Dorsolateral prefrontal cortex (tissue), 120 donors: ENCODE measurements at regions of chr15 and their contacts with region 1.

Region 1: DNA sequence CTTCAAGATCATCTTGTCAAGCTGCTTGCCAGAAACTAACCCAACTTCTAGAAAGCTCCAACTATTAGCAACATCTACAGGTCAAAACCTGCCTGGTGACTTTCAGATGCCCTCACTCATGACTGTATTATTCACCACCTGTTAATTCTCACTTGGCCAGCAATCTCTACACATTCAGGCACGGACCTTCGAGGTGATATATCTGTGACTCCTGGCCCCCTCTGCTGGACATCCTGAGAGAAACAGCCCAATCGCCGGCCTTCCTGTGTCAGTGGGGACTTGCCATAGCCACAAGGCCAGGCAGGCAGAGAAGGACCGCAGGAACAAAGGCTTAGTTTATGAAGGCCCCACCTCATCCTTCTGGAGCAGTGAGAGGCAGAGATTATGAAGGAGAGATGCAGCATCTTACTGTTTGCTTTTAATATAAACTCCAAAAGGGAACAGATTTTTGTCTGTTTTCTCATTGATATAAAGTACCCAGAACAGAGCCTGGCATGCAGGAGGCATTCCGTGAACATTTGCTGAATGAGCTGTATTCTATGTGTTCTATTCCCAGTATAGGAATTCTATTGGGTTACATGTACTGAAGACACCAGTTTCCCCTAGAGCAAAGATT is 24.4 kb upstream of the OCA2 start:
- DNase-seq: peak in 9 of 10 donors; percentile 46 to 84 (median 76)
- H3K4me3 ChIP-seq: no peak overlapping the region
- H3K27ac ChIP-seq: peak overlapping the region in 4 of 59 donors; percentile 4 to 36 (median 8)
- H3K27me3 ChIP-seq: no peaks in the 10 kb centered on the region
- CTCF ChIP-seq: peak; percentile 47 to 77 (median 66)

Region 2: DNA sequence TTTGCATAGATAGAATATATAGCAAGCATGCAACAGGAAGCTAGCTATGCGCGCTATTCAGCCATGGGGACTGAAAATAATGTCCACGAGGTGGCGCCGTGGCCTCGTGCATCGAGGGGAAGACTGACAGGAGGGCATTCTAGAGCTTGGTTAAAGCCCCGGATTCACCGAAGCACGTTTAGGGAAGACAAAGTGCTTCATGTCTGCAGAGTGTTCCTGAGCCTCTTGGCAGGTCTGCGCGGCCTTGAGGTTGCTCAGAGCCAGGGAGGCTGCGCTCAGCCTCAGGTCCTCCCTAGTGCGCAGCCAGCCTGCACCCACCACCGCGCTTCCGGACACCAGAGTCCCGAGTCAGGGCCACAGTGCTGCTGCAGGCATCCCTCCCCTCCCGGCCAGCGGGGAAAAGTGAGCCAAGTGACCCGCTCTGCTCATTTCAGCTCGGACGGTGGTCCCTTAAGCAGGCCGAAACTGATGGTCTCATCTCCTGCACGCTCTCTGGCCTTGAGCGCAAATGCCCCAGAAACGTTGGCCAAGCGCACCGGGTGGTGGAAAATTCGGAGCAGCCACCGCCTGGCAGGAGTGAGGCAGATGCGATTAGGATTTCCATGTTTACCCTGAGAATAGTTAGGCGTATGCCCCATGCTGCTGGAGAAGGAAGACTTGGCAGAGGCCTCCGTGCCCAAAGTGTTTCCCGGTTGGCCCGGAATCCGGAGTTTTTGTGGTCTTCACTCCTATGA is 1231.9 kb before region 1 on chr15:
- intact Hi-C with region 1: loop called (anchors 5 to 10 kb)
- DNase-seq: peak in 9 of 10 donors; percentile 67 to 89 (median 82)
- H3K4me3 ChIP-seq: peak overlapping the region; percentile 16 to 71 (median 50)
- H3K27ac ChIP-seq: peak overlapping the region in 6 of 59 donors; percentile 21 to 64 (median 45)
- H3K27me3 ChIP-seq: peaks cover 0 to 7% (median 0%) of the 10 kb centered on the region in 45 donors
- CTCF ChIP-seq: peak; percentile 68 to 95 (median 86)

Region 3: DNA sequence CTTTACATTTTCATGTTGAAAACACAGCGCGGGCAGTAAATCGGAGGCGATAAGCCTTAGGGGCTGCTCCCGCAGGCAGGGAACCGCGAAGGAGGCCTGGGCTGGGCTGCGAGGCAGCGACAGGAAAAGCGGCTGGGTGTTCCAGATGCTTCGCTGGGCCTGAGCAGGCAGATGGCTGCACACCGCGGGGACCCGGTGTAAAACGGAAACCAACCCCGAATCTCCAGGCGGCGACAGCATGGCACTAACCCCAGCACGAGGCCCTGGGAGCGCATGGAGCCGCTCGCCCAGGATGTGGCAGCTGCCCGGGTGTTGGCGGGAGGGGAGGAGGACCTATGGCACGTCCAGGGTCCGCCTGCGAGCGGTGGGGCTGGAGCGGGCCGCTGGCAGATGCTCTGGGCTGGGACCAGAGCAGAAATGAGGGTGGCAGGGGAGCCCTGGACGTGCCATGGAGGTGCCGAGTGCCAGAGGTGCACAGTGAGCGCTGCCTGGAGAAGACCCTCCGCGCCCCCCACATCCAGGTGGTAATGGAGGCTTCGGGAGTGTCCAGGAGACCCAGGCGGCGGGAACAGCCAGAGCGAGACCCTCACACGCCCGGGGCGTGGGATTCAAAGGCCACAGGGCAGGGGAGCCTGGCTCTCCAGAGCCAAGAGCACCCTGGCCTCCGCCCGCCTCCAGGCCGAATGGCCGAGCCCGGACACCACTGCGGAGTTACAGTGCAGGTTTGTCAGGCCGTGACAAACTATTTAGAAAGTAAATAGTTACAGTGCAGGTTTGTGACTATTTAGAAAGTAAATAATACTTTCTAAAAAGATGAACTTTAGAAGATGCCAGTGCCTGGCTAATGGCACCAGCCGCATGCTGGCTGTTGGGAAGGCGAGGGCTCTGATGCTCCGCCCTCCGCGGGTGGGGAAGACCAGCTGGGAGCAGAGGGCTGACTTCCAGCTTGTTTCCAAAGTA is 318.0 kb before region 1 on chr15:
- intact Hi-C with region 1: no loop called
- DNase-seq: no peak
- H3K4me3 ChIP-seq: no peak overlapping the region
- H3K27ac ChIP-seq: no peak overlapping the region
- H3K27me3 ChIP-seq: no peaks in the 10 kb centered on the region
- CTCF ChIP-seq: no peak

Region 4: GRCh38 chr15:27990521-27991515 is 132.7 kb before region 1 on chr15:
- intact Hi-C with region 1: no loop called
- DNase-seq: peak in 1 of 10 donors; percentile 84
- H3K4me3 ChIP-seq: no peak overlapping the region
- H3K27ac ChIP-seq: peak overlapping the region in 1 of 59 donors; percentile 76
- H3K27me3 ChIP-seq: peaks cover 0 to 13% (median 0%) of the 10 kb centered on the region in 45 donors
- CTCF ChIP-seq: no peak

Region 5: DNA sequence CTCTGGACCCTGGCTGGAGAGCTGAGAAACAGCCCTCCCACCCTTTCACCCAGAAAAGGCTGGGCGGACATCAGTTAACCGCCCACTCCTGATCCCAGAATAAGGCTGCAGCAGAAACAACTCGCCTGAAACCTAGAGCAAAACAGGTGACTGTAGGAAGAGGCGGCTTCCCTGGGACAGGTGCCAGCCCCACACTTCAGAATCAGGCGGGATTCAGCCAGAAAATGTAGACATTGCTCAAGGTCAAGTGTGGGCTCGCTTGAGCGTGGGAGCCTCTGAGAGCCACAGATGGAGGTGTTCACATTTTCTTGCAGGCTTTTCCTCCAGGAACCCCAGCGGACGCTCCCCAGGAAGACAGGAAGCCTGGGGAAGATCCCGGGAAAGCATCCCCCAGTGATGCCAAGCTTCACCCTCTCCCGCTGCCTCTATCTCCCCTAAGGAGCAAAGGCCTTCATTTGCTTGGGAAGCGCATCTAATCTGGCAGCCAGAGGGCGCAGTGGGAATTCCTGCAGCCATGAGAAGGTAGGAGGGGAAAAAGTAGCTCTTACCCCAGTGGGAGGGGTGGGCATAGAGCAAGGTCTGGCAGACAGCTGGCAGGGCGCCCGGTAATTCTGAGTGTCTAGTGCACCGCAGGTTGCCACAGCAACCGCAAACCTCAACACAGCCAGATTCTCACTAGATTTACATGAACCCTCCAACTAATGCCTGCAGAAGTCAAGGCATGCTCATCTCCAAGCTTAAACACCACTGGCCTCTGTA is 102.1 kb before region 1 on chr15:
- intact Hi-C with region 1: loop called in 1 of 2 experiments (anchors 5 kb)
- DNase-seq: peak in 9 of 10 donors; percentile 51 to 85 (median 78)
- H3K4me3 ChIP-seq: no peak overlapping the region
- H3K27ac ChIP-seq: peak overlapping the region in 43 of 59 donors; percentile 6 to 83 (median 55)
- H3K27me3 ChIP-seq: no peaks in the 10 kb centered on the region
- CTCF ChIP-seq: peak in 54 of 56 donors; percentile 22 to 68 (median 54)

Region 6: DNA sequence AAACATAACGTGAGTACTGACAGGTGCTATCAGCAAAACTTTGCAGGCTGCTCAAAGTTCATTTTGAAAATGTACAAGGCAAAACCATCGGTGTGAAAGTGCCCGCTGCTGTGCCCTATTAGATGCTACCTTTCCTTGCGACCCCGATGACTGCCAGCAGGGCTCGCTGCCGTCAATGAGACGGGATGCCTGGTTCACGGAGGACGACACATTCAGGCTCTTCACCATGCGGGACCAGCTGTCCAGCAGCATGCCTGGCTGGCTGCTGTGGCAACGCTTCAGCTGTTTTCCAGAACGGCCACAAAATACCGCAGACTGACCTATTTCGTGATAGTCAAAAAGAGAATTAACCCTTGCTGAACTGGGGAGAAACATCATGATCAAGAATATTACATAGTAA is 68.3 kb after region 1 on chr15:
- intact Hi-C with region 1: loop called in 1 of 2 experiments (anchors 5 kb)
- DNase-seq: peak; percentile 51 to 77 (median 75)
- H3K4me3 ChIP-seq: peak overlapping the region in 2 of 59 donors; percentile 3 to 20
- H3K27ac ChIP-seq: peak overlapping the region in 1 of 59 donors; percentile 4
- H3K27me3 ChIP-seq: no peaks in the 10 kb centered on the region
- CTCF ChIP-seq: peak in 54 of 56 donors; percentile 29 to 71 (median 54)